Activated CD8-positive, alpha-beta T cell treated with anti-CD3 and anti-CD28 coated beads for 36 hours (primary cell): ENCODE measurements at regions of chr10 and their contacts with region 1.

Region 1: DNA sequence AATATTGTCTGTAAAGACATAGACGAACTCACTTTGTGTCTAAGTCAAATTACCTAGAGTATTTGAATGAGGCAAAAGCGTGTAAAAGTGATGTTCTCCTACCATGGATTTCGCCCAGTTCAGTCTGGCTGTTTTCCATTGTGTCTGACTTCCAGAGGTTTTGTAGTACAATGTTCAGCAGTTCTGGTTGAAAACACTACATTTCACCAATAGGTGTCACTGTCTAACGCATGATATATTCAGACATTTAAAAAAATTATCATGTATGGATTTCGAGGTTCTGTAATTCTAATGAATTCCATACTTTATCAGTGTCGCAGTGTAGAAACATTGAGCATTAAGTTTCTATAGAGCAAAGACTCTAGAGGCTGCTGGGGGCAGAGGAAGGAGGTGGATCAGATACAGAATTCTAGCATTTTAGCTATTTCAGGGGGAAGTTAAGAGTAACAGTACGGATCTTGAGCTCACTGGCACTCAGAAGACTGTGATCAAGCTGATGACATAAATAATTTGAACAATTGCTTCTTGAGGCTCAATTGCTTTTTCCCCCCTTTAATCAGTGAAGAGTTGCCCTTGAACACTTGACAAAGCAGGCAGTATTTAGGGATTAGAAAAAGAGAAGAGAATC is 196.9 kb upstream of the RHOBTB1 start:
- DNase-seq: no peak
- ATAC-seq: peak; percentile 47
- H3K4me3 Mint-ChIP-seq: no peak overlapping the region
- H3K27ac Mint-ChIP-seq: no peak overlapping the region
- H3K4me1 Mint-ChIP-seq: no peaks in the 10 kb centered on the region
- H3K27me3 Mint-ChIP-seq: no peaks in the 10 kb centered on the region
- CTCF ChIP-seq: peak; percentile 63

Region 2: GRCh38 chr10:61130366-61130765 is 10.5 kb before region 1 on chr10:
- CTCF ChIA-PET with region 1: interaction called, 10 read pairs
- POLR2A ChIA-PET with region 1: no interaction called
- intact Hi-C with region 1: no loop called
- DNase-seq: no peak
- ATAC-seq: no peak
- H3K4me3 Mint-ChIP-seq: no peak overlapping the region
- H3K27ac Mint-ChIP-seq: no peak overlapping the region
- H3K4me1 Mint-ChIP-seq: no peaks in the 10 kb centered on the region
- H3K27me3 Mint-ChIP-seq: peaks cover 1% of the 10 kb centered on the region
- CTCF ChIP-seq: no peak

Region 3: GRCh38 chr10:61151059-61151458 is 10.2 kb after region 1 on chr10:
- CTCF ChIA-PET with region 1: interaction called, 18 read pairs
- POLR2A ChIA-PET with region 1: no interaction called
- intact Hi-C with region 1: no loop called
- DNase-seq: no peak
- ATAC-seq: no peak
- H3K4me3 Mint-ChIP-seq: no peak overlapping the region
- H3K27ac Mint-ChIP-seq: no peak overlapping the region
- H3K4me1 Mint-ChIP-seq: no peaks in the 10 kb centered on the region
- H3K27me3 Mint-ChIP-seq: peaks cover 4% of the 10 kb centered on the region
- CTCF ChIP-seq: no peak